CD4-positive, alpha-beta memory T cell (primary cell): ENCODE measurements at regions of chr22 and their contacts with region 1.

Region 1: DNA sequence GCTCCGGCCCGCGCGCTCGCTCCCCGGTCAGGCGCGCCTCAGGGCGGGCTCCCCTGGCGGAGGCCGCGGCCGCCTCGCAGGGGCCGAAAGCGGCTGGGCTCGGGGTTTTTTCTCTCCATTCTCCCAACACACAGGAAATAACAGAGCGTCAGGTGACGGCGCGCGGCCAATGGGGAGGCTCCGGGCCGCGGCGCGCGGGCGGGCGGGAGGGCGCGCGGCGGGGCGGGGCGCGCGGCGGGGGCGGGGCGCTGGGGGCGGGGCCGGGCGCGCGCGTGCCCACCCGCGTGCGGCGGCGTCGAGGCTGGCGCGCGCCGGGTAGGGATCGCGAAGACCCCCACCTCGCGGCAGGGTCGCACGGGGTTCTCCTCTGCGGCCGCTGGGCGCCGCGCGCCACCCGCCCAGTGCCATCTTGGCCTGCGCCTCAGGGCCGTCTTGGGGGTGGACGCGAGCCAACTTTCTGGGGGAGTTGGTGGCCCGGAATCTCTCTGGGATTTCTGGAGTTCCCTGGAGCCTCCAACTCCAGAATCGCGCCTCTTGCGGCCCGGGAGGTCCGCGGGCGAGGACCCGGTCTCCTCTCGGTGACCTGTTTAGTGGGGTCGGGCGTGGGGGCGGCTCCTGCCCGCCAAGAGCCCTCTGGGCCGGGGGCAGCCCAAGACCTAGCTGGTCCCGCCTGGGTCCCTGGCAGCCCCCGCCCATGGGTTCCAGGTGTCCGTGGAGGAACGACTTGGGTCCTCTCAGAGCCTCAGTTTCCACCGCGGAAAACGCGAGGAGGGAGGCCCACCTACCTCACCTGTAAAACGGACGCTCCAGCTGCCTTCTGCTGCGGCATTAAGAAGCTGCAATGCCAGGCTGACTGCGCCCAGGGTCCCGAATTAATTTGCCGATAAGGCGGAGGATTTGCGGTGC is at the start of gene TCF20:
- DNase-seq: peak; percentile 78 to 82 (median 80)
- H3K4me3 ChIP-seq: peak within 1 kb of the TSS; percentile 26 to 80
- H3K4me3 Mint-ChIP-seq: peak within 1 kb of the TSS; percentile 88 to 95 (median 93)
- H3K27ac ChIP-seq: peak within 1 kb of the TSS; percentile 91
- H3K27ac Mint-ChIP-seq: peak within 1 kb of the TSS; percentile 87 to 95 (median 90)
- H3K4me1 ChIP-seq: peaks cover 42% of the 10 kb centered on the region
- H3K4me1 Mint-ChIP-seq: peaks cover 21 to 39% (median 29%) of the 10 kb centered on the region in 4 donors
- H3K27me3 ChIP-seq: no peaks in the 10 kb centered on the region
- H3K27me3 Mint-ChIP-seq: no peaks in the 10 kb centered on the region
- total RNA-seq, gene TCF20: 88.7 to 93.4 TPM

Region 2: DNA sequence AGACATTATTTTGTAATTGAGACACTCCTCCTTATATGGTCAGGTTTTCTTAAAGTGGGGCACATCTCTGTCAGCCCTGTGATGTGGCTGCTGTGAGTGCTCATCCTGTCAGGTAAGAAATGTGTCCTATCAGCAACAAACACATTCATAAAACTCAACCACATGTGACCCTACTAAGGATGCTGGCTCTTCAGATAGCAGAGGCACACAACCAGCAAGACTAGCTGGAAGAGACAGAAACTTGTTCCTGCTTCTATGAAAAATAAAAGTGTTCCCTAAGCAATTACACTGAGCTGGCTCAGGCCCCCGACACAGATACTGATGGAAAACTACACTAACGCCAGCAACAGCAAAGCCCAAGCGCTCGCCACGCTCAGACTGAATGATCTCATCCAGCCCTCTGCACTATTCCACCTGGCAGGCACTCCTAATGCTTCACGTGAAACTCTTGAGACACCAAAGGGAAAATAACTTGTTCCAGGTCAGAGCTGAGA is 90.4 kb before region 1 on chr22:
- CTCF ChIA-PET with region 1: no interaction called
- POLR2A ChIA-PET with region 1: interaction called, 3 read pairs
- intact Hi-C with region 1: loop called (anchors 1 kb)
- DNase-seq: peak; percentile 76 to 86 (median 84)
- H3K4me3 ChIP-seq: no peak overlapping the region
- H3K4me3 Mint-ChIP-seq: peak overlapping the region in 7 of 8 donors; percentile 55 to 89 (median 72)
- H3K27ac ChIP-seq: peak overlapping the region; percentile 58
- H3K27ac Mint-ChIP-seq: peak overlapping the region; percentile 92 to 97 (median 96)
- H3K4me1 ChIP-seq: peaks cover 90% of the 10 kb centered on the region
- H3K4me1 Mint-ChIP-seq: peaks cover 71 to 96% (median 83%) of the 10 kb centered on the region in 4 donors
- H3K27me3 ChIP-seq: no peaks in the 10 kb centered on the region
- H3K27me3 Mint-ChIP-seq: no peaks in the 10 kb centered on the region

Region 3: GRCh38 chr22:42300259-42301076 is 29.7 kb after region 1 on chr22:
- CTCF ChIA-PET with region 1: no interaction called
- POLR2A ChIA-PET with region 1: interaction called, 3 read pairs
- intact Hi-C with region 1: loop called (anchors 5 kb)
- DNase-seq: peak in 3 of 5 donors; percentile 39 to 83 (median 48)
- H3K4me3 ChIP-seq: peak overlapping the region; percentile 23 to 54
- H3K4me3 Mint-ChIP-seq: peak overlapping the region; percentile 79 to 90 (median 83)
- H3K27ac ChIP-seq: peak overlapping the region; percentile 64
- H3K27ac Mint-ChIP-seq: peak overlapping the region; percentile 85 to 99 (median 96)
- H3K4me1 ChIP-seq: peaks cover 88% of the 10 kb centered on the region
- H3K4me1 Mint-ChIP-seq: peaks cover 56 to 96% (median 73%) of the 10 kb centered on the region in 4 donors
- H3K27me3 ChIP-seq: no peaks in the 10 kb centered on the region
- H3K27me3 Mint-ChIP-seq: no peaks in the 10 kb centered on the region

Region 4: DNA sequence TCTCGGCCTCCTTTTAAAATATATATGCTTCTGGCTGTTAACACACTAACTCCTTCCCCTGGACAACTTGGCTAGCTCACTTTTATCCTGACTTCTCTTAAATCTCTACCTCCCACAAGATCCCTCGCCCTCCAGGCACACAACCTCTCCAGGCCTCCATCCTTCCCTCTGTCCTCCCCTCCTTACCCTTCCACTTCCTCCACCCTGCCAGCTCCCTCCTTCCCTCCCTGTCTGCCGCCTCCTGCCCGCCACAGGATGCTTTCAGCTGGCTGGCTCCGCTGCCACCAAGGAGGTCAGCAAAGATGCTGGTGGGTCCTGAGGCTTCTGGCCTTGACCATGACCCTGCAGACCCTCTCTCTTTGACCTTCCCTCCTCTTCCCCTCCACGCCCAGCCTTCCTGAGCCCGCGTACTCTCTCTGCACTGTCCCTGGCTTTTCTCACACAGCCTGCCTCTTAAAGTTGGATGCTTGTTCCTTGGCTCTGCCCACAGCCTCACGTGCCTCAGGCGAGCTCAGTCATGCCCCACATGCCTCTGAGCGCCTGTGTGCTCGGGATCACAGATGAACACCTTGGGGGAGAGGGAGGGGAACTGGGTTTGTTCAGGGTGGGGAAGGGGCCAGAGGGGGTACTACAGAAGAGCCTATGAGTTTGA is 154.7 kb after region 1 on chr22:
- CTCF ChIA-PET with region 1: no interaction called
- POLR2A ChIA-PET with region 1: no interaction called
- intact Hi-C with region 1: no loop called
- DNase-seq: no peak
- H3K4me3 ChIP-seq: no peak overlapping the region
- H3K4me3 Mint-ChIP-seq: no peak overlapping the region
- H3K27ac ChIP-seq: no peak overlapping the region
- H3K27ac Mint-ChIP-seq: no peak overlapping the region
- H3K4me1 ChIP-seq: no peaks in the 10 kb centered on the region
- H3K4me1 Mint-ChIP-seq: peaks cover 0 to 2% (median 0%) of the 10 kb centered on the region in 4 donors
- H3K27me3 ChIP-seq: no peaks in the 10 kb centered on the region
- H3K27me3 Mint-ChIP-seq: peaks cover 9 to 12% of the 10 kb centered on the region in 2 donors